Gastrocnemius medialis (tissue), 4 donors: ENCODE measurements at regions of chr11 and their contacts with region 1.

Region 1: GRCh38 chr11:47407746-47408590 is at the start of gene SLC39A13:
- DNase-seq: peak; percentile 91
- ATAC-seq: peak; percentile 84 to 87
- H3K4me3 ChIP-seq: peak within 1 kb of the TSS; percentile 69 to 97 (median 90)
- H3K27ac ChIP-seq: peak within 1 kb of the TSS; percentile 93 to 100 (median 96)
- H3K4me1 ChIP-seq: peaks cover 21 to 31% of the 10 kb centered on the region in 2 donors
- H3K27me3 ChIP-seq: no peaks in the 10 kb centered on the region
- CTCF ChIP-seq: peak; percentile 71 to 96 (median 94)
- POLR2A ChIP-seq: peak; percentile 95 to 97
- total RNA-seq, gene SLC39A13: 16.8 to 48.9 (median 25.6) TPM

Region 2: DNA sequence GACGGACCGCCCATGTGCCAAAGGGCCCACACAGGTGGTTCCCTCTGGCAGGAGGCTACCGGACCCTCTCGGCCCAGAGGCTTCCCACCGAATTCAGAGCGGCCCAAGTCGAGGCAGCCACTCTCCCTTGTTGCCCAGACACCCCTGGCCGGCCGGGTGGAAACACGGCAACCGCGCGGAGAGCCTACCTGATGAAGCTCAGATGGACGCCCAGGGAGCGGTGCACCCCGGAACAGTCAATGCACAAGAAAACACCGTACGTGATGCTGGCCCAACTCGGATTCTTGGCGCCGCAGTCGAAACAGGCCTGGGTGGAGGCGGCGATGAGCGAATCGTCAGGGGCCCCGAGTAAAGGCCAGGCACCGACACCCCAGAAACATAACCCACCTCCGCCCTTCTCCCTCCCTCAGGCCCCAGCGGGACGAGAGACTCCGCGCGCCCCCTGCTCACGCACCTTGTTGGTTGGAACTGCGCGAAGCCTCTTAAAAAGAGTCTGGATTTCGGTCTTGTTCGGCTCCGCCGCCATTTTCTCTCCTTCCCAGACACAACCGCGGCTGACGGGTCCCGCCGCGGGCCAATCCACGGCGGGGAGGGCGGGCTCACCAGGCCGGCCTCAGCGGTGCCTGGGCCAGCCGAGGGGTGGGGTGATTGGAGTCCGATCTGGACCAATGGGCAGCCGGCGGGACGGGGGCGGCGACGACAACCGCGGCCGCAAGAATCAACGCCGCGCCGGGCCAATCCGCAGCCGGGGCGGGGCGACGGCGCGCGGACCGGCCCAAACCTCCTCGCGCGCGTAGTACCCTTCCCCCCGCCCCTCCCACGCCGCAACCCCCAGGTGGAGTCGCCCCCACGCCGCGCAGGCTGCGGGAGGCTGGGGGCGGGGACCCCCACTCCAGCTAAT is 231.4 kb before region 1 on chr11 and contains the start of gene ARFGAP2:
- in situ Hi-C with region 1: no loop called
- intact Hi-C with region 1: loop called (anchors 5 kb)
- DNase-seq: peak; percentile 96 to 97
- ATAC-seq: peak; percentile 75 to 78
- H3K4me3 ChIP-seq: peak within 1 kb of the TSS; percentile 83 to 93 (median 89)
- H3K27ac ChIP-seq: peak within 1 kb of the TSS; percentile 97 to 99 (median 98)
- H3K4me1 ChIP-seq: peaks cover 69 to 71% of the 10 kb centered on the region in 2 donors
- H3K27me3 ChIP-seq: no peaks in the 10 kb centered on the region
- CTCF ChIP-seq: no peak
- POLR2A ChIP-seq: peak; percentile 43 to 62
- total RNA-seq, gene ARFGAP2: 120 to 165 (median 142) TPM

Region 3: GRCh38 chr11:47248664-47249377 is 159.1 kb before region 1 on chr11 and contains the start of gene ACP2:
- in situ Hi-C with region 1: no loop called
- intact Hi-C with region 1: loop called (anchors 5 kb)
- DNase-seq: peak; percentile 83 to 88
- ATAC-seq: peak; percentile 95 to 97
- H3K4me3 ChIP-seq: peak within 1 kb of the TSS; percentile 79 to 96 (median 92)
- H3K27ac ChIP-seq: peak within 1 kb of the TSS; percentile 84 to 97 (median 94)
- H3K4me1 ChIP-seq: peaks cover 21 to 30% of the 10 kb centered on the region in 2 donors
- H3K27me3 ChIP-seq: no peaks in the 10 kb centered on the region
- CTCF ChIP-seq: peak in 4 of 5 experiments; percentile 17 to 36 (median 32)
- POLR2A ChIP-seq: peak; percentile 46 to 49
- total RNA-seq, gene ACP2: 12.4 to 36.2 (median 27.9) TPM

Region 4: GRCh38 chr11:47373876-47374720 is 33.9 kb before region 1 on chr11:
- in situ Hi-C with region 1: loop called in 2 of 4 experiments (anchors 5 kb)
- intact Hi-C with region 1: loop called (anchors 1 kb)
- DNase-seq: peak; percentile 46 to 71
- ATAC-seq: peak; percentile 78 to 87
- H3K4me3 ChIP-seq: no peak overlapping the region
- H3K27ac ChIP-seq: peak overlapping the region in 2 of 4 donors; percentile 10 to 37
- H3K4me1 ChIP-seq: peaks cover 0 to 6% of the 10 kb centered on the region in 2 donors
- H3K27me3 ChIP-seq: no peaks in the 10 kb centered on the region
- CTCF ChIP-seq: peak; percentile 90 to 97 (median 93)
- POLR2A ChIP-seq: no peak

Region 5: GRCh38 chr11:47448566-47449427 is 40.8 kb after region 1 on chr11 and contains the start of gene RAPSN:
- in situ Hi-C with region 1: no loop called
- intact Hi-C with region 1: loop called (anchors 1 kb)
- DNase-seq: peak; percentile 83 to 91
- ATAC-seq: peak; percentile 87 to 90
- H3K4me3 ChIP-seq: peak within 1 kb of the TSS; percentile 46 to 74 (median 60)
- H3K27ac ChIP-seq: peak within 1 kb of the TSS; percentile 81 to 94 (median 90)
- H3K4me1 ChIP-seq: peaks cover 10 to 19% of the 10 kb centered on the region in 2 donors
- H3K27me3 ChIP-seq: no peaks in the 10 kb centered on the region
- CTCF ChIP-seq: peak in 1 of 5 experiments; percentile 8
- POLR2A ChIP-seq: peak; percentile 54 to 72
- total RNA-seq, gene RAPSN: 48.9 to 68.6 (median 59.4) TPM

Region 6: GRCh38 chr11:47578524-47579460 is 170.8 kb after region 1 on chr11 and contains the starts of genes KBTBD4 and NDUFS3:
- in situ Hi-C with region 1: no loop called
- intact Hi-C with region 1: loop called (anchors 5 kb)
- DNase-seq: peak; percentile 83 to 84
- ATAC-seq: peak; percentile 96 to 98
- H3K4me3 ChIP-seq: peak within 1 kb of the TSS; percentile 79 to 98 (median 82)
- H3K27ac ChIP-seq: peak within 1 kb of the TSS; percentile 89 to 94 (median 91)
- H3K4me1 ChIP-seq: peaks cover 28 to 33% of the 10 kb centered on the region in 2 donors
- H3K27me3 ChIP-seq: no peaks in the 10 kb centered on the region
- CTCF ChIP-seq: no peak
- POLR2A ChIP-seq: peak; percentile 52 to 53
- total RNA-seq, gene KBTBD4: 25.0 to 35.6 (median 30.4) TPM
- total RNA-seq, gene NDUFS3: 143 to 240 (median 194) TPM